ENCODE measurements at regions of chr3 and their contacts with region 1.

Region 1: DNA sequence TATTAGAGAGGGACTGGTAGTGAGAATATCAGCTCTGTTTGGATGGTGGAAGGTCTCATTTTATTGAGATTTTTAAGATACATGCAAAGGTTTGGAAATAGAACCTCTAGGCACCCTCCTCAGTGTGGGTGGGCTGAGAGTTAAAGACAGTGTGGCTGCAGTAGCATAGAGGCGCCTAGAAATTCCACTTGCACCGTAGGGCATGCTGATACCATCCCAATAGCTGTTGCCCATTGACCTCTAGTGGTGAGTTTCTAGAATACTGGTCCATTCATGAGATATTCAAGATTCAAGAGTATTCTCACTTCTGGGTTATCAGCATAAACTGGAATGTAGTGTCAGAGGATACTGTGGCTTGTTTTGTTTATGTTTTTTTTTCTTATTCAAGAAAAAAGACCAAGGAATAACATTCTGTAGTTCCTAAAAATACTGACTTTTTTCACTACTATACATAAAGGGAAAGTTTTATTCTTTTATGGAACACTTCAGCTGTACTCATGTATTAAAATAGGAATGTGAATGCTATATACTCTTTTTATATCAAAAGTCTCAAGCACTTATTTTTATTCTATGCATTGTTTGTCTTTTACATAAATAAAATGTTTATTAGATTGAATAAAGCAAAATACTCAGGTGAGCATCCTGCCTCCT is 87.2 kb downstream of the TGFBR2 start:
- DNase-seq: peak; percentile 45
- H3K4me3 Mint-ChIP-seq: no peak overlapping the region
- H3K27ac Mint-ChIP-seq: no peak overlapping the region
- H3K4me1 Mint-ChIP-seq: peaks cover 35% of the 10 kb centered on the region
- H3K27me3 Mint-ChIP-seq: no peaks in the 10 kb centered on the region
- CTCF ChIP-seq: peak; percentile 51

Region 2: DNA sequence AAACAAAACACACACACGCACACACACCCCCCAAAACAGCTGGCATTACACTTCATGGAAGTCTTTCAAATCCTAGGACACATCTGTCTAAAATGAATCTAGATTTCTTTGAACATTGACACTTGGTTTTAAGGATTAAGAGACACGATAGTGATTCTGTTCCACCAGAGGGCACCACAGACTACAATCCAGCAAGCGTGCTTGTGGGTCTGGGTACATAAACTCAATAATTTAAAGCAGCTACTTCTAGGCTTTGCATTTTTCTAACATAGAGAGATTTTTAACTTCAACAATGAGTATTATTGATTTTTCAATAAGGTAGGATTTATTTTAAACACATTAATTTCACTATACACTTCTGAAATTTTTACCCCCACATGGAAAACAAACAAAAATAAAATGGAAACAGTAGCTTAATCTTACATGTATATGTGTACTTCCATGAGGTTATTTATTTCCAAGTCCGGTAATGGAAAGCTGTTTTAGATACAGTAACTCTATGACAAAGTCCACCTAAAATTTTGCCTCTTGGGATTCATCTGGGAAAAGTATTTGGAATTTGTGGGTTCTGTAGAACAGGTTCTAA is 651.2 kb before region 1 on chr3:
- CTCF ChIA-PET with region 1: interaction called, 8 read pairs
- intact Hi-C with region 1: loop called (anchors 5 kb)
- DNase-seq: peak; percentile 71
- H3K4me3 Mint-ChIP-seq: no peak overlapping the region
- H3K27ac Mint-ChIP-seq: no peak overlapping the region
- H3K4me1 Mint-ChIP-seq: no peaks in the 10 kb centered on the region
- H3K27me3 Mint-ChIP-seq: no peaks in the 10 kb centered on the region
- CTCF ChIP-seq: peak; percentile 23

Region 3: GRCh38 chr3:30112902-30113484 is 580.6 kb before region 1 on chr3:
- CTCF ChIA-PET with region 1: interaction called, 6 read pairs
- intact Hi-C with region 1: loop called (anchors 1 kb)
- DNase-seq: no peak
- H3K4me3 Mint-ChIP-seq: no peak overlapping the region
- H3K27ac Mint-ChIP-seq: no peak overlapping the region
- H3K4me1 Mint-ChIP-seq: peaks cover 8% of the 10 kb centered on the region
- H3K27me3 Mint-ChIP-seq: no peaks in the 10 kb centered on the region
- CTCF ChIP-seq: no peak

Region 4: GRCh38 chr3:30319713-30320112 is 373.9 kb before region 1 on chr3:
- CTCF ChIA-PET with region 1: interaction called, 4 read pairs
- intact Hi-C with region 1: loop called (anchors 5 kb)
- DNase-seq: peak; percentile 43
- H3K4me3 Mint-ChIP-seq: no peak overlapping the region
- H3K27ac Mint-ChIP-seq: no peak overlapping the region
- H3K4me1 Mint-ChIP-seq: peaks cover 13% of the 10 kb centered on the region
- H3K27me3 Mint-ChIP-seq: no peaks in the 10 kb centered on the region
- CTCF ChIP-seq: peak; percentile 53

Region 5: GRCh38 chr3:30606301-30607031 is 87.1 kb before region 1 on chr3 and contains the start of gene TGFBR2:
- CTCF ChIA-PET with region 1: interaction called, 7 read pairs
- intact Hi-C with region 1: loop called (anchors 5 kb)
- DNase-seq: peak; percentile 95
- H3K4me3 Mint-ChIP-seq: peak within 1 kb of the TSS; percentile 66
- H3K27ac Mint-ChIP-seq: peak within 1 kb of the TSS; percentile 82
- H3K4me1 Mint-ChIP-seq: peaks cover 49% of the 10 kb centered on the region
- H3K27me3 Mint-ChIP-seq: no peaks in the 10 kb centered on the region
- CTCF ChIP-seq: no peak
- total RNA-seq, gene TGFBR2: 103 and 105 TPM in 2 replicates

Measured in Calu3 (cell line).